A673 (cell line): ENCODE measurements at regions of chr3 and their contacts with region 1.

Region 1: DNA sequence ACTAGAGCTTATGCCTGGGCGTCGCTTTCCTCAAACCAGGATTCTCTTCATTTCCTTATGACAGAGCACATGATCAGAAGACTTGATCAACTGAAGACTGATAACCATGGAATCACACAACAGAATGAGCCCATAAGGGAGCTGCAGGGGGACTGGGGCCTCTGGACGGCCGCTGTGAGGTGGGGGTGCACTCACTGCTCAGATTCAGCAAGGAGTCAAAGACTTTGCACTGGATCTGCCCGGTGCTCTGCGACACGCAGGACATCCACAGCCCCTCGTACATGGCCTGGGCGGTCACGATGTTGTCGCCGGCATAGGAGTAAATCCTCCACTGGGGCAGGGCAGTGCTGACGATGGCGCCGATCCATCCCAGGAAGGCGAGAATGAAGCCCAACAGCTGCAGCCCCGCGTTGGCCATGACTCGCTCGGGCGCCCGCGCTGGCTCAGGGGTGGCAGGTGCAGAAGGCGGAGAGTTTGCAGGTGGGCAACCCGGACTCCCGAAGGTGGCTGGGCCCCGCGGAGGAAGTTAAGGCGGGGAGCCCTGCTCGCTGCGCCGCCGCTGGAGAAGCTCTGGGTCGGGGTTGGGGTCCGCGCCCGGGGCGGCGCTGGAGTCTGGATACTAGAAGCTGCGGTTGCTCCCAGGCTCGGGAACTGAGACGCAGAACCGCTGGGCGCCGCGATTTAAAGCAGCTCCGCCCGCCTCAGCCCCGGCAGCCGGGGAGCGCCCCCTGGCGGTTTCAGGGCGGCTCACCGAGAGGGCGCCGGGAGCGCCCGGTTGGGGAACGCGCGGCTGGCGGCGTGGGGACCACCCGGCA is at the start of gene CLDN1:
- DNase-seq: peak; percentile 95
- H3K4me3 ChIP-seq: peak within 1 kb of the TSS; percentile 78
- H3K27ac ChIP-seq: peak within 1 kb of the TSS; percentile 78
- H3K4me1 ChIP-seq: peaks cover 52% of the 10 kb centered on the region
- H3K27me3 ChIP-seq: no peaks in the 10 kb centered on the region
- CTCF ChIP-seq: peak; percentile 92
- total RNA-seq, gene CLDN1: 173 and 184 TPM in 2 replicates

Region 2: GRCh38 chr3:189961525-189962161 is 360.4 kb before region 1 on chr3:
- CTCF ChIA-PET with region 1: interaction called, 9 read pairs
- POLR2A ChIA-PET with region 1: interaction called, 3 read pairs
- intact Hi-C with region 1: loop called (anchors 1 kb)
- DNase-seq: peak; percentile 94
- H3K4me3 ChIP-seq: no peak overlapping the region
- H3K27ac ChIP-seq: no peak overlapping the region
- H3K4me1 ChIP-seq: peaks cover 29% of the 10 kb centered on the region
- H3K27me3 ChIP-seq: no peaks in the 10 kb centered on the region
- CTCF ChIP-seq: peak; percentile 93

Region 3: DNA sequence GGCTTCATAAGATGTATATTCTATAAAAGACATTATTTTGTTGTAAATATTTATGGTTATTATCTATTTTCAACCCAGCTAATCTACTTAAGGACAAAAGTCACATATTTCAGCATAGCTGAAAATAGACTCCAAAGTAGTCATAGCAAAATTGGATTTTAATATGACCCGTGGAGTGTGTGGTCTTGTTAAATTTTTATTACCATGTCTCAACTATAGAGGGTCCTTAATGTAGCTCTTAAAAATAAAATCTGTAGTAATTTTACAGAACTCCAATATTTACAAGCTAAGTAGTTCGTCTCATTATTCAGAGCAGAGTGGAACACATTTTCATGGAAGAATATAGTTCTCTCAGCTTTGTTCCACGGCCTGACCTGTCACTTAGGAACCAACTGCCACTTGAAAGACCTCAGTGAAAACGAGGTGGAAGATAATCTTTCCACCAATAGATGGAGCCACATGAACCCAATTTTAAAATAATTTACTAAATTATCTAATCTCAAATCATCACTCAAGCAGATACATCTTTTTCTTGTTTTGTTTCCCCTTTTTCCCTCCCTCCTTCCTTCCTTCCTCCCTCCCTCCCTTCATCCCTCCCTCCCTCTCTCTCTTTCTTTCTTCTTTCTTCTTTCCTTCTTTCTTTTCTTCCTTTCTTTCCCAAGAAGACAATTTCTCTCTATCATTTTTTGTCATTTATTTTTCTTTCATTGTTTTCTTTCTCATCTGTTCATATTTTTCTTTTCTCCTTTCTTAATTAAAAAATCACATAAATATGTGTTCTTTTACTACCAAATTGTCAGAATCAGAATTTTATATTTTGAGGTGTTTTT is 96.9 kb before region 1 on chr3:
- CTCF ChIA-PET with region 1: interaction called, 7 read pairs
- POLR2A ChIA-PET with region 1: interaction called, 3 read pairs
- intact Hi-C with region 1: loop called (anchors 2 kb)
- DNase-seq: peak; percentile 79
- H3K4me3 ChIP-seq: no peak overlapping the region
- H3K27ac ChIP-seq: peak overlapping the region; percentile 7
- H3K4me1 ChIP-seq: peaks cover 27% of the 10 kb centered on the region
- H3K27me3 ChIP-seq: no peaks in the 10 kb centered on the region
- CTCF ChIP-seq: peak; percentile 61

Region 4: DNA sequence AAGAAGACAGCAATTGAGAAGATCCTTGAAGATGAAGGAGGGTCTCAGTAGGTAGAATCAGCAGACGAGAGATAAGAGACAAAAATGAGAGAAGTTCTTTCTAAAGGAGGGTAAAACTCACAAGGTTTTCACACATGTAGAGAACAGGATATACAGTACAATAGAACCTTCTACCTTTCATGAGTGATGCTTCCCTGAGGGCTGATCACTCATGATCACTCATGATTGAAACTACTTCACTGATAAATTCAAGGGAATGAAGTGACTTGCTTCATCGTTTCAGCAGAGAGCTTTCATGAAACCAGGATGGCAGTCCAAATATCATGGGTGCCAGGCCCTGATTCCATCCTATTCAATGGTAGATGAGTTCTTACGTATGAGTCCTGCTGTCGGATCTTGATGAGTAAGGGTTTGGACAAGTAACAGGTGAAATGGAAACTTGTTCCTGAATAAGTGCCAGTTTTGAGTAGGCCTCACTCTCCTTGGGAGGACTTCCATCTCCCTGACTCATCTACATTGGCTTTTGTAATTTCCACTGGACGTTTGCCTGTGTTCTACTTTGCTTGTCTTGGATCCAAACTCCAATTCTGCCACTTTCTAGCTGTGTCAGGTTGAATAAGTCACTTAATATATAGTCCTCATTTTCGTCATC is 56.4 kb after region 1 on chr3:
- CTCF ChIA-PET with region 1: interaction called, 7 read pairs
- POLR2A ChIA-PET with region 1: no interaction called
- intact Hi-C with region 1: loop called (anchors 5 kb)
- DNase-seq: no peak
- H3K4me3 ChIP-seq: no peak overlapping the region
- H3K27ac ChIP-seq: peak overlapping the region; percentile 84
- H3K4me1 ChIP-seq: peaks cover 71% of the 10 kb centered on the region
- H3K27me3 ChIP-seq: no peaks in the 10 kb centered on the region
- CTCF ChIP-seq: no peak